MCF 10A (cell line): ENCODE measurements at regions of chr4 and their contacts with region 1.

Region 1: GRCh38 chr4:88823058-88823919 is 125.7 kb upstream of the NAP1L5 start:
- DNase-seq: peak; percentile 86
- H3K4me3 Mint-ChIP-seq: peak overlapping the region; percentile 81
- H3K27ac Mint-ChIP-seq: peak overlapping the region; percentile 98
- H3K4me1 Mint-ChIP-seq: peaks cover 31% of the 10 kb centered on the region
- H3K27me3 Mint-ChIP-seq: no peaks in the 10 kb centered on the region
- CTCF ChIP-seq: no peak

Region 2: GRCh38 chr4:88523325-88524129 is 299.8 kb before region 1 on chr4 and contains the start of gene PYURF:
- CTCF ChIA-PET with region 1: interaction called, 5 read pairs
- POLR2A ChIA-PET with region 1: no interaction called
- intact Hi-C with region 1: loop called (anchors 5 kb)
- DNase-seq: peak; percentile 93
- H3K4me3 Mint-ChIP-seq: peak within 1 kb of the TSS; percentile 97
- H3K27ac Mint-ChIP-seq: peak within 1 kb of the TSS; percentile 89
- H3K4me1 Mint-ChIP-seq: peaks cover 14% of the 10 kb centered on the region
- H3K27me3 Mint-ChIP-seq: no peaks in the 10 kb centered on the region
- CTCF ChIP-seq: no peak
- total RNA-seq, gene PYURF: 80.9 and 82.5 TPM in 2 replicates

Region 3: DNA sequence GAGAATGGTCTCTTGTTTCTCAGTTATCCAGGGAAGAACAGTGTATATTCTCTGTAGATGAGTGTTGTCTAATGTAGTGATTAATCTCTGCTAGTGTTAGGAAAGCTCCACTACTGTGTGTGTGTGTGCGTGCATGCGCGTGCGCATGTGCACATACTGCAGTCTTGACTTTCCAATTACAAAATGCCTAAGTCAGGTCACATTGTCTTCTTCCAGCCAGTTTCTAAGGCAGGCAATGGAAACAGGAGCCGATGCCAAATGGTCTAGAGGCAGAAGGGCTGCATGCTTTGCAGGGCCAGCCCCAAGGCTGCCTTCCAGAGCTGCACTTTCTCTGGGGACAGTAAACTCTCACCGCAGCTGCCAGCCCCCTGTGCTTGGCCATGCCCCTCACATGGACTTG is 95.1 kb before region 1 on chr4:
- CTCF ChIA-PET with region 1: no interaction called
- POLR2A ChIA-PET with region 1: no interaction called
- intact Hi-C with region 1: no loop called
- DNase-seq: no peak
- H3K4me3 Mint-ChIP-seq: no peak overlapping the region
- H3K27ac Mint-ChIP-seq: no peak overlapping the region
- H3K4me1 Mint-ChIP-seq: no peaks in the 10 kb centered on the region
- H3K27me3 Mint-ChIP-seq: no peaks in the 10 kb centered on the region
- CTCF ChIP-seq: no peak

Region 4: DNA sequence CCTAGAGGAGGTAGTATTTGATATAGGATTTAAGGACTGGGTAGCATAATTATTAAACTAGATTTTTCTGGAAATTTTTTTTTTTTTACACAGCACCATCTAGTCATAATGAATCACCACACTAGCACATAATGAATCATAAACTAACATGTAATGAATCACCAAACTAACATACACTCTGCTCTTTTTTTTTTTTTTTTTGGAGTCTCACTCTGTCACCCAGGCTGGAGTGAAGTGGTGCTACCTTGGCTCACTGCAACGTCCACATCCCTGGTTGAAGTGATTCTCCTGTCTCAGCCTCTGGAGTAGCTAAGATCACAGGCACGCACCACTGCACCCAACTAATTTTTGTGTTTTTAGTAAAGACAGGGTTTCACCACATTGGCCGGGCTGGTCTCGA is 141.2 kb after region 1 on chr4:
- CTCF ChIA-PET with region 1: interaction called, 4 read pairs
- POLR2A ChIA-PET with region 1: interaction called, 14 read pairs
- intact Hi-C with region 1: loop called (anchors 1 kb)
- DNase-seq: peak; percentile 65
- H3K4me3 Mint-ChIP-seq: peak overlapping the region; percentile 18
- H3K27ac Mint-ChIP-seq: peak overlapping the region; percentile 94
- H3K4me1 Mint-ChIP-seq: peaks cover 29% of the 10 kb centered on the region
- H3K27me3 Mint-ChIP-seq: no peaks in the 10 kb centered on the region
- CTCF ChIP-seq: no peak

Region 5: GRCh38 chr4:89110986-89111832 is 287.9 kb after region 1 on chr4 and contains the start of gene TIGD2:
- CTCF ChIA-PET with region 1: no interaction called
- POLR2A ChIA-PET with region 1: interaction called, 7 read pairs
- intact Hi-C with region 1: loop called (anchors 1 kb)
- DNase-seq: peak; percentile 90
- H3K4me3 Mint-ChIP-seq: peak within 1 kb of the TSS; percentile 79
- H3K27ac Mint-ChIP-seq: peak within 1 kb of the TSS; percentile 61
- H3K4me1 Mint-ChIP-seq: peaks cover 11% of the 10 kb centered on the region
- H3K27me3 Mint-ChIP-seq: no peaks in the 10 kb centered on the region
- CTCF ChIP-seq: peak; percentile 79
- total RNA-seq, gene TIGD2: 15.1 and 15.5 TPM in 2 replicates

Region 6: GRCh38 chr4:89434364-89434988 is 611.2 kb after region 1 on chr4:
- CTCF ChIA-PET with region 1: no interaction called
- POLR2A ChIA-PET with region 1: no interaction called
- intact Hi-C with region 1: loop called (anchors 5 kb)
- DNase-seq: peak; percentile 54
- H3K4me3 Mint-ChIP-seq: no peak overlapping the region
- H3K27ac Mint-ChIP-seq: no peak overlapping the region
- H3K4me1 Mint-ChIP-seq: peaks cover 8% of the 10 kb centered on the region
- H3K27me3 Mint-ChIP-seq: no peaks in the 10 kb centered on the region
- CTCF ChIP-seq: peak; percentile 73